Prostate gland (tissue), 2 donors: ENCODE measurements at regions of chr3 and their contacts with region 1.

Region 1: GRCh38 chr3:113696658-113697499 is 437 bp upstream of the USF3 start:
- DNase-seq: peak; percentile 100
- H3K4me3 ChIP-seq: peak overlapping the region; percentile 99 to 100
- H3K27ac ChIP-seq: peak overlapping the region; percentile 100
- H3K4me1 ChIP-seq: no peaks in the 10 kb centered on the region
- H3K27me3 ChIP-seq: no peaks in the 10 kb centered on the region
- CTCF ChIP-seq: peak in 3 of 4 experiments; percentile 10 to 75 (median 43)
- POLR2A ChIP-seq: no peak

Region 2: GRCh38 chr3:113304856-113305540 is 391.9 kb before region 1 on chr3:
- intact Hi-C with region 1: no loop called
- DNase-seq: no peak
- H3K4me3 ChIP-seq: no peak overlapping the region
- H3K27ac ChIP-seq: no peak overlapping the region
- H3K4me1 ChIP-seq: no peaks in the 10 kb centered on the region
- H3K27me3 ChIP-seq: no peaks in the 10 kb centered on the region
- CTCF ChIP-seq: no peak
- POLR2A ChIP-seq: no peak

Region 3: DNA sequence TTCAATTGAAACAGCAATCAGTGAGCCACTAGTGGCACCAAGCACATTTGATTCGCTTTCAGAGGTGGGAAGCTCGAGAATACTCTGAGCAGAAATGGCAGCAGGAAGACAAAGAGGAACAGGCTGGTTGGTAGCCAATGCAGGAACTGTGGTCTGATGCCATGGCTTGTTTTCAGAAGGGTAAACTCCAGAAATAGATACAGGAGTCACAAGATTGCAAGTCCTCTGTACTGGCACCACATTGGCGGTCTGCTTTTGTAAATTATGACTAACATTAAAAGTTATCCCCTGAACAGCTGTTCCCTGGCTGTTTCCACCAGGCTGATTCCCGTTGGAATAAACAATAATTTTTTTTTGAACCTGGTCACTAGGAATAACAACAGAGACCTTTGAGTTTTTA is 36.0 kb before region 1 on chr3:
- intact Hi-C with region 1: loop called (anchors 5 kb)
- DNase-seq: no peak
- H3K4me3 ChIP-seq: no peak overlapping the region
- H3K27ac ChIP-seq: no peak overlapping the region
- H3K4me1 ChIP-seq: no peaks in the 10 kb centered on the region
- H3K27me3 ChIP-seq: no peaks in the 10 kb centered on the region
- CTCF ChIP-seq: no peak
- POLR2A ChIP-seq: no peak

Region 4: DNA sequence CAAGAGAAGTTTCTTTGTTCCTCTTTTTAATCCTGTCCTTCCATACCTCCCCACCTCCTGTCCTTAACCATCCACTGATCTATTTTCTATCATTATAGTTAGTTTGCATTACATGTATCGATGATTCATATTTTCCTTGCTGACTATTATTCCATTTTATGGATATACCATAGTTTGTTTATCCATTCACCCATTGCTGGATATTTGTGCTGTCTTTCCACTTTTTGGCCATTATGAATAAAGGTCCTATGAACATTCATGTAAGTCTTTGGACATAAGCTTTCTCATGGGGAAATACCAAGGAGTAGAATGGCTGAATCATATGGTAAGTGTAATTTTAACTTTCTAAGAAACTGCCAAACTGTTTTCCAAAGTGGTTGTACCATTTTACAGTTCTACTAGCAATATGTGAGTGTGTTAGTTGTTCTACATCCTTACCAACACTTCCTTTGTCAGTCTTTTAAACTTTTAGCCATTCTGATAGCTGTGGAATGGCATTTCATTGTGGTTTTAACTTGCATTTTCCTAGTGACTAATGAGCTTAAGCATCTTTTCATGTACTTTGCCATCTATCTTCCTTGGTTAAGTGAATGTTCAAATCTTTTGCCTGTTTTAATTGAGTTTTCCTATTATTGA is 61.6 kb after region 1 on chr3:
- intact Hi-C with region 1: no loop called
- DNase-seq: no peak
- H3K4me3 ChIP-seq: no peak overlapping the region
- H3K27ac ChIP-seq: no peak overlapping the region
- H3K4me1 ChIP-seq: no peaks in the 10 kb centered on the region
- H3K27me3 ChIP-seq: no peaks in the 10 kb centered on the region
- CTCF ChIP-seq: no peak
- POLR2A ChIP-seq: no peak

Region 5: GRCh38 chr3:114428043-114428595 is 731.2 kb after region 1 on chr3:
- intact Hi-C with region 1: no loop called
- DNase-seq: no peak
- H3K4me3 ChIP-seq: no peak overlapping the region
- H3K27ac ChIP-seq: no peak overlapping the region
- H3K4me1 ChIP-seq: no peaks in the 10 kb centered on the region
- H3K27me3 ChIP-seq: no peaks in the 10 kb centered on the region
- CTCF ChIP-seq: no peak
- POLR2A ChIP-seq: no peak